ENCODE measurements at regions of chr12 and their contacts with region 1.

Region 1: DNA sequence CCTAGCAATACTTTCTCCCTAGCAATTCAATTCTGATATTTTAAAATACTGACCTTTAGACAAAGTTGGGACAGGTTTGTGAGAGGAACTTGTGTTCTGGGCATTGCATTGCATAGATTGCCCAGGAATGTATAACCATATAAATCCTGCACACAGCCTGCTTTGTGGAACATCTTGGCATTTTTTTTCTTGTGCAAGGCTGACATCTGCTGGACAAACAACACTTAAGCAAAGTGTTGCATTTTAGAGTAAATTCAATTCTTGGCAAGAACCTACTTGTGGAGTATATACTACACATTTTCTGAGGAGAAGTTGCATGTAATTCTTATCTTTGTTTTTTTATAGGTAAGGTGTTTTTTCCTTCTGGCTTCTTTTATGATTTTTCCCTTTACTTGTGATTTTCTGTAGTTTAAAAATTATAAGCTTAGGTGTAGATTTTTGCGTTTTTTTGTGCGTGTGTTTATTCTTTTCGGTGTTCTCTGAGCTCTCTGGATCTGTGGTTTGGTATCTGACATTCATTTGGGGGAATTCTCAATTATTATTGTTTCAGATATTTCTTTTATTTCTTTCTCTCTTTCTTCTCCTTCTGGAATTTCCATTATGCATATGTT is 26.4 kb downstream of the TESPA1 start:
- DNase-seq: peak; percentile 25
- CTCF ChIP-seq: peak; percentile 73

Region 2: GRCh38 chr12:54749191-54749818 is 208.8 kb before region 1 on chr12:
- in situ Hi-C with region 1: loop called (anchors 25 kb)
- DNase-seq: peak; percentile 52
- CTCF ChIP-seq: peak; percentile 83